Posterior cingulate gyrus (tissue), 11 donors: ENCODE measurements at regions of chr11 and their contacts with region 1.

Region 1: DNA sequence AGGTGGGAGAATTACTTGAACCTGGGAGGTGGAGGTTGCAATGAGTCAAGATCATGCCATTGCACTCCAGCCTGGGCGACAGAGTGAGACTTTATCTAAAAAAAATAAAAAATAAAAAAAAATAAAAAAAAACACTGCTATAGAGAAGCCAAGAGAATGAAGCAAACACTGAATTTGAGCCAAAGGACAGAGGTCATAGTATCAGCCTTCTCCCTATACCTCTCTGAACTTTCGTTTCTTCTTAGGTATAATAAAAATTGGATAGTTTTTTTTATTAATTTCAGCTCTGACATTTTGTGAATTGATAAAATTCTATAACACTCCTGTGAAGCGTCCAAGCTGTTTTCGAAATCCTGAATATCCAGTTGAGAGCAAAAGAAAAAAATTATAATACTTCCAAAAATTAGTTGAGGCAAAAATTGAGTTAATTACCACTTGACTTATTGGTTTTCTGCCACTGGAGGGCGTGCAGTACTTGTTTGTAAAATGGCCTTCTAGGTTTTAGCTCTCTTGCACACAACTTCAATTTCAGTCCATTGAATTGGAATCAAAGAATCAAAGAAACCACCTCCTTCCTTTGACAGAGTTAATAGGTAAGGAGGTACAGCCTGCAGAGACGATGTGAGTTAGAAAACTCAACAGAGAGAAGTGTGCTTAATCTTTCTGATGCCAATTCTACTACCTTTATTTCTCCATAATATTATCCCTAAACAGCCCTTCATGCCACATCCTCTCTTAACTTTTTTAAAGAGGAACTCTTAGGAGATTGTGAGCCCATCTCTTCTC is 143.2 kb downstream of the BBOX1 start:
- DNase-seq: peak in 5 of 10 donors; percentile 32 to 66 (median 43)

Region 2: GRCh38 chr11:27297616-27298015 is 113.8 kb after region 1 on chr11:
- intact Hi-C with region 1: loop called (anchors 2 kb)
- DNase-seq: no peak

Region 3: GRCh38 chr11:27485930-27486773 is 302.3 kb after region 1 on chr11:
- intact Hi-C with region 1: loop called (anchors 1 kb)
- DNase-seq: peak in 2 of 10 donors; percentile 32 to 59